Mammary epithelial cell (primary cell): ENCODE measurements at regions of chr4 and their contacts with region 1.

Region 1: DNA sequence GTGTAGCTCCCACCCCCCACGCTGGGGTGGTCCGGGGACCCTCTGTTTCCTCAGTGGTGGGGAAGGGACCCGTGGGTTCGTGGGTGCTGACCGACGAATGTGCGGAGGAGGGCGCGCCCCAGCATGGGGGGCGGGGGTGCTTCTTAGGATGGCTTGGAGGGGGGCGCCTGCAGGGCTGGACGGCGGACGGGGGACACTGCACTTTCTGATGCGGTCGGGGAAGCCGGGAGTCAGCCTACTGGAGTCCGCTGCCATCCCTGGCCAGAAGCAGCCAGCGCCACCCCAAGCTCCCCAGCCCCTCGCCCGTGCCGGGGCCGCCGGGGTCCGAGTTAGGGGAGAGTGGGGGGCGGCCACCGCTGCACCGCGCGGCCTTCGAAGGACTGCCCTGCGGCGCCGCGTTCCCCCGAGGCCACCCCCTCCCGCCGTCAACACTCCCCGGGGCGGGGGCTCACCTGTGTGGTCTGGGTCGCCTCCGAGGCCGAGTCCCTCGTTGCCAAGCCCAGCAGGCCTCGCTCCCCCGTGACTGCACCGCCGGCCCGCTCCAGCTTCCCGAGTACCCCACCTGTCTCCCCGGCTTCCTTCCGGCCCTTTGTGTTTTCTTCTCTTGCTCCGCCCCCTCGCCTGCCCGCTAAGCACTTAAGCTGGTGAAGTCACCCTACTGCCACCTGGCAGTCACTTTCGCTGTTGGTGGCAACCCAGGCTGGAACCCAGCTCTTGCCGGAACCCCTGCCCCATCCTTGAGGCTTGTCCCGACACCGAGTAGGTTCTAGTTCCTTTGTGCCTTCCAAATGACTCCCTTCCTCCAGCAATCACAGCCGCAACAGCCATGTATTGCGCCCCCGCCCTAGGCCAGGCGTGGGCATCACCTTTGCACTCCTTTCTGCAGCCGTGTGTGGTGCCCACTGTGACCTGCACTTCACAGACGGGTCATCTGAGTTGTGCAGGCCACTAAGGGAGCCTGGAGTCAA is at the start of gene OCIAD2:
- DNase-seq: peak; percentile 57
- H3K4me3 ChIP-seq: peak within 1 kb of the TSS; percentile 68 to 80 (median 74)
- H3K27ac ChIP-seq: peak within 1 kb of the TSS; percentile 54
- H3K4me1 ChIP-seq: peaks cover 39% of the 10 kb centered on the region
- H3K27me3 ChIP-seq: no peaks in the 10 kb centered on the region
- CTCF ChIP-seq: peak in 1 of 2 donors; percentile 21
- total RNA-seq, gene OCIAD2: 19.2 to 138 TPM

Region 2: DNA sequence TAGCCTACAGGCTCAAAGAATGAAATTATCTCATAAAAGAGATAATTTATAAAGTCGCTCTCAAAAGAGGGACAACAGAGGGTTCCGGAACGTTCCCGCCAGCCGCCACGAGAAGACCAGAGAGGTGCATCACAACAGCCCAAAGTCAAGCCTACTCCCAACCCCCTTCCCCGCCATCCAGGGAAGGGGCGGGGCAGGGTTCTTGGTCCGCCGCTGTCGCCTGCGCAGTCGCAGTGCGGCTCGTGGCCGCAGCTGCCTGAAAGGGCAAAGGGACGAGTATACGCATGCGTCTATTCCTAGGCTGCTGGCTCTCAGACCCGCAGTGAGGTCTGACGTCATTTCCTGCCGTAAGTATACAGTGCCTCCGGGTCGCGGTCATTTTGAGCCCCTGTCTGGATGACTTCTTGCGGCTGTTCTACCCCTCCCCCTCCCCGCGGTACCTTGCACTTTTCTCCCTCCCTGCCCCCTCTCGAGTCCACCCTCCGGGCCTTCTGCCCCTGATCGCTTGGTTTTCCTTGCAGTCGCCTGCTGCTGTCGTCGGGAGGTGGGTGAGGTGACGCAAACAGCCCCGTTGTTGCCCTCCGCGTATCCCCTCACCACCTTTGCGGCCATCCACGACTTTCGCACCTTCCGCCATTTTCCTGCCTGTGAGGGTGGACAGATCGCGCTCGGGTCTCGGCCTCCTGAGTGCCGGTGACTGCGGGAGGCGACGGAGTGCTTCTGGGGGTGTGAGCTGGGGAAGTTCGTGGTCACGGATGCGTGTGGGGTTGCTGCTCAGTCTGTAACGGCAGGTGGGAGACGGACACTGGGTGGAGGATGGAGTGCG is 75.6 kb before region 1 on chr4 and contains the start of gene OCIAD1:
- CTCF ChIA-PET with region 1: no interaction called
- dilution Hi-C with region 1: no loop called
- in situ Hi-C with region 1: no loop called
- intact Hi-C with region 1: loop called (anchors 5 kb)
- DNase-seq: peak; percentile 98
- H3K4me3 ChIP-seq: peak within 1 kb of the TSS; percentile 50 to 98 (median 98)
- H3K27ac ChIP-seq: peak within 1 kb of the TSS; percentile 94
- H3K4me1 ChIP-seq: peaks cover 9% of the 10 kb centered on the region
- H3K27me3 ChIP-seq: no peaks in the 10 kb centered on the region
- CTCF ChIP-seq: no peak
- total RNA-seq, gene OCIAD1: 85.5 to 125 TPM

Region 3: DNA sequence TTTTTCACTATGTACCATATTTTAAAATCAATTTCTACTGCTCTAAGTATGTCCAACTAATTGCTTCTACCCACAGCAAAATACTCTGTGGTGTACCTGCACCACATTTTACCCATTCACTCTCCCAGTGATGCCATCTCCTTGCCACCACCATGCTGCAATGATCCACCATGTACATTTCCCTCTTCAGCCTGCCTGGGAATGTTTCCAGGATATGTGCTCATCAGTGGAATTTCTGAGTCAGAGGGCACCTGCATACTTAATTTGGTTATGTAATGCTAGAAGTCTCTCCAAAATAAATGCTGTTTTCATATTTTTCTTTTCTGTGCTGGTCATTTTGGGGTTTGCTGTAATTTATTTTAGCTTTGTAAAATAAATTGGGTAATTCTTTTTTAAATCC is 33.3 kb after region 1 on chr4:
- CTCF ChIA-PET with region 1: interaction called, 5 read pairs
- dilution Hi-C with region 1: no loop called
- in situ Hi-C with region 1: no loop called
- intact Hi-C with region 1: loop called (anchors 1 kb)
- DNase-seq: peak; percentile 91
- H3K4me3 ChIP-seq: no peak overlapping the region
- H3K27ac ChIP-seq: peak overlapping the region; percentile 55
- H3K4me1 ChIP-seq: peaks cover 19% of the 10 kb centered on the region
- H3K27me3 ChIP-seq: no peaks in the 10 kb centered on the region
- CTCF ChIP-seq: peak in 1 of 2 donors; percentile 2